WTC11 (cell line): ENCODE measurements at regions of chr20 and their contacts with region 1.

Region 1: GRCh38 chr20:14142171-14142570 is 146.9 kb downstream of the MACROD2 start:
- DNase-seq: peak; percentile 67
- ATAC-seq: peak; percentile 96
- H3K4me3 Mint-ChIP-seq: no peak overlapping the region
- H3K27ac Mint-ChIP-seq: no peak overlapping the region
- H3K4me1 Mint-ChIP-seq: peaks cover 5% of the 10 kb centered on the region
- H3K27me3 Mint-ChIP-seq: no peaks in the 10 kb centered on the region
- CTCF ChIP-seq: peak; percentile 30; the same call in 1 of the 2 replicates

Region 2: DNA sequence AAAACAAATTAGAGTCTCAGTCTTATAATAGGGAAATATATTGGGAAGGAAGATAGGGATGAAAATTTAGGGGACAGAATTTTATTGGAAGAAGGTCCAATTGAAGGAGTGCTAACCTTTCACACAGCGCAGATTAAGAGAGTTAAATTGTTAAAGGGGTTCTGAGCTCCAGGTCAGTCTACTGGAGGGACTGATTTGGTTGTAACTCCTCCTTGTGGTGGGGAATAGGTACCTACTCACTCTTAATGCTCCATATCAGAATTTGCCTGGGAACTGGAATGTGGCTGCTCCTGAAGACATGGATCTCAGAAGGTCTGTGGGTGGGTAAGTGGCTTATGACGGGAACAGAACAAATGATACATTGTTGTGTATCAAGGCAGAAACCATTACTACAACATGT is 51.7 kb after region 1 on chr20:
- CTCF ChIA-PET with region 1: interaction called, 21 read pairs
- POLR2A ChIA-PET with region 1: no interaction called
- DNase-seq: no peak
- ATAC-seq: peak; percentile 93
- H3K4me3 Mint-ChIP-seq: no peak overlapping the region
- H3K27ac Mint-ChIP-seq: no peak overlapping the region
- H3K4me1 Mint-ChIP-seq: peaks cover 6% of the 10 kb centered on the region
- H3K27me3 Mint-ChIP-seq: no peaks in the 10 kb centered on the region
- CTCF ChIP-seq: peak; percentile 25; the same call in 1 of the 2 replicates

Region 3: GRCh38 chr20:14264869-14265268 is 122.7 kb after region 1 on chr20:
- CTCF ChIA-PET with region 1: interaction called, 11 read pairs
- POLR2A ChIA-PET with region 1: no interaction called
- DNase-seq: no peak
- ATAC-seq: peak; percentile 76
- H3K4me3 Mint-ChIP-seq: no peak overlapping the region
- H3K27ac Mint-ChIP-seq: no peak overlapping the region
- H3K4me1 Mint-ChIP-seq: no peaks in the 10 kb centered on the region
- H3K27me3 Mint-ChIP-seq: no peaks in the 10 kb centered on the region
- CTCF ChIP-seq: no peak